Tibial artery (tissue), 4 donors: ENCODE measurements at regions of chr2 and their contacts with region 1.

Region 1: DNA sequence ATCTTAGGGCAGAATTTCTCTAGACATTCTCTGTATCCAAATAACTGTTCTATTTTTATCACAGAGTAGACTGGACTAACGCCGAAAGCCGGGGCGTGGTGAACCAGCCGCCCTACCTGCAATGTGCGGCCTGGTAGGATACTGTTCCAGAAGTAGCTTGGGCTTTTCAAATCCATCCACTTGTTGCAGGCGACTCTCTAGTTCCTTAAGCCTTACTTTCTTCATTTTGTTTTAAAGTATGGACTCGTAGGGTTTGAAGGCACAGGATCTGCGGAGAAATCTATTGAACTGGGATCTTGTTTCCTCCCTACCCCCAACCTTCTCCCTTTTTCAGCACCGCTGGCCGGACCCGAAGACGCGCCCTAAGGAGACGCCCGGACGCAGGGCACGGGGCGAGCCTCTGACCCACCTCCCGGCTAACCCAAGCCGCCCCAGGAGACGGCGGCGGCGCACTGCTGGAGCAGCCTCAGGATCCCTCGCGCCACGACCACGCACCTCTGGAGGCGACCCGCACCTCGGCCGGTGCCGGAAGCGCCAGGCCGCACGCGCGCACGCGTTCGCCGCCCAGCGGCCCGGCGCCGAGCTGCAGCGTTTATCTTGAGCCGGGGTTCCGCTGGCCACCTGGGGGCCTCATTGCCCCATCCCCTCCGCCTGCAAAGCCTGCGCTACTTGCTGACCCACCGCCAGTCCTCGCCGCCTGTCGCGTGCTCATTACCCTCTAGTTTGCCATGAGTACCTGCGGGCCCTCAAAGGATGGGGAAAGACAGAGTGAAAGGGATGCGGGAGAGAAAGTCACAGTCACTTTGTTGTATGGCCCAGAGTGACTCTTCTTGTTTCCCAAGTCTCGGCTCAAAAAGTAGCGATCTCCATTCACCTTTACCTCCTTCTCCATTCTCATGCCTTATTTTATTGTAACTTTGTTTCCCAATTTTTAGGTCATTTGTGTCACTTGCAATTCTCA is at the start of gene METTL5:
- DNase-seq: peak; percentile 75 to 88
- H3K4me3 ChIP-seq: peak within 1 kb of the TSS; percentile 72 to 73
- H3K27ac ChIP-seq: peak within 1 kb of the TSS; percentile 74 to 81
- H3K4me1 ChIP-seq: peaks cover 0 to 65% (median 42%) of the 10 kb centered on the region in 4 donors
- H3K27me3 ChIP-seq: no peaks in the 10 kb centered on the region
- CTCF ChIP-seq: peak; percentile 95 to 96

Region 2: GRCh38 chr2:169579044-169579443 is 245.6 kb before region 1 on chr2:
- intact Hi-C with region 1: loop called (anchors 5 kb)
- DNase-seq: no peak
- H3K4me3 ChIP-seq: no peak overlapping the region
- H3K27ac ChIP-seq: no peak overlapping the region
- H3K4me1 ChIP-seq: peaks cover 0 to 3% (median 0%) of the 10 kb centered on the region in 4 donors
- H3K27me3 ChIP-seq: no peaks in the 10 kb centered on the region
- CTCF ChIP-seq: no peak

Region 3: DNA sequence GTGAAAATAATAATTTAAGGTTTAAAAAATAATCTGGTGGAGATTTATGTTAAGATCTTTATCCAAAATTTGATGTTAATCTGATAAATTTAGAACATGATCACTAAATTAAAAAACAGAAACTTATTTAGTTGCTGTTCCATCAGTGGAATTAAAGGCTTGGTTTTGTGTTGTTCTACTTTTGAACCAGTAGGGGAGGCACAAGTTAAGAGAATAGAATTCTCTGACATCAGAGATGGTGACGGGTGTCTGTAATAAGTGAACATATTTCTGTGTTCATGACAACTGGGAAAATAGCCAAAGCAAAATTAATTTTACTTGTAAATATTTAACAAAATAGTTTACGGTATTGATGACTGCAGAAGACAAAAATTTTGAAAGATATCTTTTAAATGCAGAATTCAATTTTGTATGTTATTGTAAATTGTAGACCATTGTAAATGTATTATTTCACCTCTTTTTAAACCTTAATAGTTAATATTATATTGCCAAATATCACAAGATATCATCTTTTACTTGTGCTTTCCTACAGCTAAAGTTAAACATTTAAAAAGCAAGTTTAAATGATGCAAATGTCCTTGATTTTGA is 108.6 kb after region 1 on chr2:
- intact Hi-C with region 1: loop called (anchors 5 kb)
- DNase-seq: no peak
- H3K4me3 ChIP-seq: no peak overlapping the region
- H3K27ac ChIP-seq: no peak overlapping the region
- H3K4me1 ChIP-seq: no peaks in the 10 kb centered on the region
- H3K27me3 ChIP-seq: no peaks in the 10 kb centered on the region
- CTCF ChIP-seq: peak; percentile 67 to 73

Region 4: DNA sequence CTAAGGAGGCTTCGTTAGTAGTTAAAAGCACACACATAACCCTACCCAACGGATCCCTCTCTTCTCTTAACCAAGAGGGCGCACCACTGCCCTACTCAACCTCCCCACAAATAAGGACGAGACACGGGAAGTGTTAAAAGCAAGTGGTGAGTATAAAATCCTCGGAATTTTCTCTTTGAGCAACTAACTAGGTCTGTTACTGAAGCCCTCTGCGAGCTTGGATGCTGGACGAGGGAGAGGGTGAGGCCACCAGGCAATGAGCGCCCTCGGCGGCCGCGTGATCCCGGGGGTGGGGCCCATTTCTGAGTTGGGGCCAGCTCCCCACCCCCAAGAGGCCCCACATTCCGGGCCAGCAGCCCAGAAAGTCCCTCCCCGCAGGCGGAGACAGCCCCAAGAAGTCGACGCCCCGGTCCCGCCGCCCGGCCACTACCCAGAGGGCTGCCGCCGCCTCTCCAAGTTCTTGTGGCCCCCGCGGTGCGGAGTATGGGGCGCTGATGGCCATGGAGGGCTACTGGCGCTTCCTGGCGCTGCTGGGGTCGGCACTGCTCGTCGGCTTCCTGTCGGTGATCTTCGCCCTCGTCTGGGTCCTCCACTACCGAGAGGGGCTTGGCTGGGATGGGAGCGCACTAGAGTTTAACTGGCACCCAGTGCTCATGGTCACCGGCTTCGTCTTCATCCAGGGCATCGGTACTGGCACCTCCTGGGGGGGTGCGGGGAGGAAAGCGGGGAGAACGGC is 1697.6 kb after region 1 on chr2 and contains the start of gene CYBRD1:
- intact Hi-C with region 1: loop called (anchors 10 kb)
- DNase-seq: peak; percentile 93 to 97
- H3K4me3 ChIP-seq: peak within 1 kb of the TSS; percentile 94 to 100
- H3K27ac ChIP-seq: peak within 1 kb of the TSS; percentile 99
- H3K4me1 ChIP-seq: peaks cover 0 to 40% (median 8%) of the 10 kb centered on the region in 4 donors
- H3K27me3 ChIP-seq: no peaks in the 10 kb centered on the region
- CTCF ChIP-seq: peak in 1 of 2 experiments; percentile 9